Heart right ventricle (tissue), 16 donors: ENCODE measurements at regions of chr1 and their contacts with region 1.

Region 1: GRCh38 chr1:150404465-150404864 is 40.5 kb downstream of the RPRD2 start:
- DNase-seq: no peak
- ATAC-seq: no peak
- H3K4me3 ChIP-seq: no peak overlapping the region
- H3K27ac ChIP-seq: no peak overlapping the region
- H3K4me1 ChIP-seq: peaks cover under 1 to 24% (median 7%) of the 10 kb centered on the region in 9 donors
- H3K27me3 ChIP-seq: no peaks in the 10 kb centered on the region
- CTCF ChIP-seq: no peak

Region 2: GRCh38 chr1:150392627-150393026 is 11.8 kb before region 1 on chr1:
- intact Hi-C with region 1: loop called in 1 of 10 experiments (anchors 1 kb)
- DNase-seq: no peak
- ATAC-seq: no peak
- H3K4me3 ChIP-seq: no peak overlapping the region
- H3K27ac ChIP-seq: no peak overlapping the region
- H3K4me1 ChIP-seq: peaks cover 0 to 27% (median 10%) of the 10 kb centered on the region in 9 donors
- H3K27me3 ChIP-seq: no peaks in the 10 kb centered on the region
- CTCF ChIP-seq: no peak